ENCODE measurements at regions of chr10 and their contacts with region 1.

Region 1: GRCh38 chr10:63157845-63158624 is 24.9 kb downstream of the NRBF2 start:
- DNase-seq: peak; percentile 61
- ATAC-seq: peak; percentile 61
- H3K4me3 Mint-ChIP-seq: no peak overlapping the region
- H3K27ac Mint-ChIP-seq: no peak overlapping the region
- H3K4me1 Mint-ChIP-seq: peaks cover 6% of the 10 kb centered on the region
- H3K27me3 Mint-ChIP-seq: no peaks in the 10 kb centered on the region

Region 2: GRCh38 chr10:62327897-62328296 is 830.1 kb before region 1 on chr10:
- CTCF ChIA-PET with region 1: no interaction called
- POLR2A ChIA-PET with region 1: no interaction called
- intact Hi-C with region 1: no loop called
- DNase-seq: no peak
- ATAC-seq: no peak
- H3K4me3 Mint-ChIP-seq: no peak overlapping the region
- H3K27ac Mint-ChIP-seq: no peak overlapping the region
- H3K4me1 Mint-ChIP-seq: no peaks in the 10 kb centered on the region
- H3K27me3 Mint-ChIP-seq: peaks cover 3% of the 10 kb centered on the region

Region 3: DNA sequence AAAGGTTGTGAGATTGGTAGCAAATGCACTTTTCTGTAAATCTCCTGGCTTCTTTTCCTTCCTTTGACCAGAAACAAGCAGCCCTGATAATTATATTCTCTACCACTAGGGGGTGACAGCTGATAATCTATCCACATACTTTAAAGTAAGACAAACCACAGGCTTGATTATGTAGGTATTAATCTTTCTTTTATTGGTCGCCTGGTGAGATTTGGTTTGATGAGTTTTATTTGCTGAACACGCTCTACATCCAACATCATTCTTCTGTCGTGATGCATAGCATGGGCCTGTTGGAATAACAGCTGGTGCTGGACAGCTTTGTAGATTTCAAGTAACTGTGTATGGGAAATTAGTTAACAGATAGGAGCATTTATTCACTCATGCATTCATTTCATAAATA is 720.3 kb before region 1 on chr10:
- CTCF ChIA-PET with region 1: interaction called, 8 read pairs
- POLR2A ChIA-PET with region 1: no interaction called
- intact Hi-C with region 1: loop called (anchors 1 kb)
- DNase-seq: no peak
- ATAC-seq: no peak
- H3K4me3 Mint-ChIP-seq: no peak overlapping the region
- H3K27ac Mint-ChIP-seq: no peak overlapping the region
- H3K4me1 Mint-ChIP-seq: peaks cover 19% of the 10 kb centered on the region
- H3K27me3 Mint-ChIP-seq: peaks cover 20% of the 10 kb centered on the region

Region 4: GRCh38 chr10:62554632-62555199 is 603.3 kb before region 1 on chr10:
- CTCF ChIA-PET with region 1: interaction called, 3 read pairs
- POLR2A ChIA-PET with region 1: no interaction called
- intact Hi-C with region 1: loop called in 1 of 2 experiments (anchors 1 kb)
- DNase-seq: peak; percentile 16
- ATAC-seq: peak; percentile 57
- H3K4me3 Mint-ChIP-seq: no peak overlapping the region
- H3K27ac Mint-ChIP-seq: no peak overlapping the region
- H3K4me1 Mint-ChIP-seq: no peaks in the 10 kb centered on the region
- H3K27me3 Mint-ChIP-seq: peaks cover 20% of the 10 kb centered on the region

Region 5: DNA sequence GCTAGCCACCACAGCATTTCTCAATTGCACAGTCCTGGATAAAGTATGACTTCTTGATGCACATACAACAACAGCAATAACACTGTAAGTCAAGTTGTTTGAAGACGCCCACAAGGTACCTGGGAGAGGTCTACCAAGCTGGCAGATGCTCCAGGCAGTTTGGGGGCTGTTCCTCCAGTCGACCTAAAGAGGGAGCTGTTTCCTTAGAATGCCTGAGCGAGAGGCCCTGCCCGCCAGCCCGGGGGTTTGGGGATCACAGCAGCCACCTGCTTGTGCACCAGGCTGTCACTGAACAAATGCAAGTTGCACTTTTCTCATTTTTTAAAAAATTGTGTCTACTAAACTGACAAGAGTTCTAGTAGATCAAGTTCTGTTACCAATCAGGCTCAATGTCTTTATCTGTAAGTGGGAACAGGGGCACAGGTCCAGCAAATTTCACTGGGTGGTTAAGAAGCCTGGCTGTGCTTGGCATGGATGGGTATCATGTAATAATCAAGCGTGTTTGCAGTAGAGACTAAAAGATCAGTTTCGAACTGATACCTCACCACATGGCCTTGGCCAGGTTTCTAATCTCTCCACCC is 547.3 kb before region 1 on chr10:
- CTCF ChIA-PET with region 1: interaction called, 6 read pairs
- POLR2A ChIA-PET with region 1: no interaction called
- intact Hi-C with region 1: loop called (anchors 1 to 5 kb)
- DNase-seq: peak; percentile 87
- ATAC-seq: peak; percentile 79
- H3K4me3 Mint-ChIP-seq: no peak overlapping the region
- H3K27ac Mint-ChIP-seq: no peak overlapping the region
- H3K4me1 Mint-ChIP-seq: peaks cover 27% of the 10 kb centered on the region
- H3K27me3 Mint-ChIP-seq: peaks cover 14% of the 10 kb centered on the region

Region 6: GRCh38 chr10:63114031-63114814 is 43.8 kb before region 1 on chr10:
- CTCF ChIA-PET with region 1: interaction called, 4 read pairs
- POLR2A ChIA-PET with region 1: no interaction called
- intact Hi-C with region 1: loop called in 1 of 2 experiments (anchors 5 kb)
- DNase-seq: no peak
- ATAC-seq: no peak
- H3K4me3 Mint-ChIP-seq: no peak overlapping the region
- H3K27ac Mint-ChIP-seq: no peak overlapping the region
- H3K4me1 Mint-ChIP-seq: no peaks in the 10 kb centered on the region
- H3K27me3 Mint-ChIP-seq: peaks cover 8% of the 10 kb centered on the region

Region 7: DNA sequence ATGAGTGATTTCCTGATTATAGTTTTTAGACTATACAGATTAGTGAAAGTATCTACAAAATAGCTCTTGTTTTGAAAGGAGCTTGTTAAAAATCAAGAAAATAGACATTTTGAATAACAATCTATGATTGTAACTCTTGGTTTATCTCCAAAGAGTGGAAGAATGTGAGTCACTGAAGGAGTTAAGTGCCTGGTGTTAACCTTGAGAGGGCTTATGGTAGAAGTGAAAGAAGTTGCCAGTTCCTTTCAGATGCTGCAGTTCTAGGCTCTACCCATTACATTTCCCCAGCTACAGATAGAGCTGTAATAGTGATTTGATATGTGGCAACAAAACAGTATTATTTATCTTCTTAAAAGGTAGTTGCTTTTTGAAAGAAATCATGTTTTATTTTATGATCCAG is 12.3 kb before region 1 on chr10:
- CTCF ChIA-PET with region 1: interaction called, 30 read pairs
- POLR2A ChIA-PET with region 1: no interaction called
- intact Hi-C with region 1: no loop called
- DNase-seq: no peak
- ATAC-seq: peak; percentile 93
- H3K4me3 Mint-ChIP-seq: no peak overlapping the region
- H3K27ac Mint-ChIP-seq: no peak overlapping the region
- H3K4me1 Mint-ChIP-seq: peaks cover 45% of the 10 kb centered on the region
- H3K27me3 Mint-ChIP-seq: no peaks in the 10 kb centered on the region